GM12878 (cell line): ENCODE measurements at regions of chr15 and their contacts with region 1.

Region 1: GRCh38 chr15:40108855-40109735 is at the start of gene BMF:
- DNase-seq: peak; percentile 84
- ATAC-seq: peak; percentile 60
- H3K4me3 ChIP-seq: peak within 1 kb of the TSS; percentile 73
- H3K27ac ChIP-seq: peak within 1 kb of the TSS; percentile 96
- H3K4me1 ChIP-seq: peaks cover 54% of the 10 kb centered on the region
- H3K27me3 ChIP-seq: no peaks in the 10 kb centered on the region
- CTCF ChIP-seq: peak in 2 of 3 experiments; percentile 19 to 39; a peak in 3 of 6 replicates
- EP300 ChIP-seq: 0 out of 4 replicates have a peak, but pooled peaks of 1 of the 2 experiments have one; percentile 21
- POLR2A ChIP-seq: peak; percentile 49; the same call in 1 of the 2 replicates
- RAD21 ChIP-seq: peak; percentile 33
- polyA plus RNA-seq, gene BMF: 0.82 to 1.3 TPM

Region 2: GRCh38 chr15:39788108-39788507 is 321.0 kb before region 1 on chr15:
- CTCF ChIA-PET with region 1: interaction called, 17 read pairs
- POLR2A ChIA-PET with region 1: interaction called, 3 read pairs
- RAD21 ChIA-PET with region 1: interaction called, 8 read pairs
- SMC1A ChIA-PET with region 1: interaction called, 11 read pairs
- in situ Hi-C with region 1: loop called (anchors 10 kb)
- intact Hi-C with region 1: loop called (anchors 5 kb)
- DNase-seq: no peak
- ATAC-seq: peak; percentile 73
- H3K4me3 ChIP-seq: no peak overlapping the region
- H3K27ac ChIP-seq: no peak overlapping the region
- H3K4me1 ChIP-seq: peaks cover 17% of the 10 kb centered on the region
- H3K27me3 ChIP-seq: no peaks in the 10 kb centered on the region
- CTCF ChIP-seq: no peak
- EP300 ChIP-seq: no peak
- POLR2A ChIP-seq: no peak
- RAD21 ChIP-seq: no peak

Region 3: DNA sequence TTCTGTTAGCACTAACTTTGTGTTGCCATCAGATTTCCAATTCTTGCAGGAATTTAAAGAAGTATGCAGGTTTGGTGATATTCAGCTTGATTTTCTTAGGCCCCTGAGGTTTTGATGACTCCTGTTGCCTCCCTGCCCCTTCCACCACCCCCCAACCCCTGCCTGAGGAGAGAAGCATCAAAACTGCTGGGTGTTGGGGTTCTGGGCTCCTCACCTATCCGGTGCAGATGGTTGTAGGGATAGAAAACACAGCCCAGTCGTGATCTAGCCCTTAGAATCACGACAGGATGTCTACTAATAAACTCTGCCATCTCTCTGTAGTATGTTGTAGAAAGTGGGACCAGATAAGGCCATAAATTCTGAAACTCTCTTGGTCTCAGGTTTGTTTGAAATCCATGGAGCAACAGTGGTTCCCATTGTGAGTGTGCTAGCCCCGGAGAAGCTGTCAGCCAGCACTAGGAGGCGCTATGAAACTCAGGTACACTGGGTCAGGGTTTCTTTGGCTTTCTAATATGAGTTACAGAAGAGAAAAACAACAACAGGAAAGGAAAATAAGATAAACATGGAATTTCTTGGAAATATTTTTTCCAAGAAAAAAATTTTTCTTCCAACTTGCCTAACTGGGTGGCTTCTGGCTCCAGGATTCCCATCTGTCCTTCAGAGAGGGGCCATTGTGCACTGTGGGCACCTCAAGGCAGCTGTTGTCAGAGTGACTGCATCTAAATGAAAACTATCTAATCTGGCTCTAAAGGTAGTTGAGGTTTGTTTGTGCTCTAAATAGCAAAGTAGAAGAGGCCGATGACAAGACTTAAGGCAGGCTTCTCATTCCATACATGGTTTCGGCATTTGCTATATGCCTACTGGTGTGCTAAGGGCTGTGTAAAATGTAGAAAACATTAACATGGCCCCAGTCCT is 78.9 kb before region 1 on chr15:
- CTCF ChIA-PET with region 1: interaction called, 29 read pairs
- POLR2A ChIA-PET with region 1: no interaction called
- RAD21 ChIA-PET with region 1: interaction called, 12 read pairs
- SMC1A ChIA-PET with region 1: interaction called, 1,082 read pairs
- in situ Hi-C with region 1: no loop called
- intact Hi-C with region 1: no loop called
- DNase-seq: no peak
- ATAC-seq: peak; percentile 73
- H3K4me3 ChIP-seq: no peak overlapping the region
- H3K27ac ChIP-seq: no peak overlapping the region
- H3K4me1 ChIP-seq: no peaks in the 10 kb centered on the region
- H3K27me3 ChIP-seq: no peaks in the 10 kb centered on the region
- CTCF ChIP-seq: peak; percentile 48 to 72 (median 59); a peak in 5 of 6 replicates
- EP300 ChIP-seq: no peak
- POLR2A ChIP-seq: no peak
- RAD21 ChIP-seq: peak; percentile 52

Region 4: GRCh38 chr15:40054605-40055545 is 54.2 kb before region 1 on chr15:
- CTCF ChIA-PET with region 1: interaction called, 776 read pairs
- POLR2A ChIA-PET with region 1: interaction called, 307 read pairs
- RAD21 ChIA-PET with region 1: interaction called, 903 read pairs
- SMC1A ChIA-PET with region 1: interaction called, 1,082 read pairs
- in situ Hi-C with region 1: loop called (anchors 10 kb)
- intact Hi-C with region 1: no loop called
- DNase-seq: no peak
- ATAC-seq: peak; percentile 86
- H3K4me3 ChIP-seq: no peak overlapping the region
- H3K27ac ChIP-seq: peak overlapping the region; percentile 89
- H3K4me1 ChIP-seq: peaks cover 58% of the 10 kb centered on the region
- H3K27me3 ChIP-seq: no peaks in the 10 kb centered on the region
- CTCF ChIP-seq: no peak
- EP300 ChIP-seq: peak; percentile 72 to 83; a peak in 3 of 4 replicates
- POLR2A ChIP-seq: peak; percentile 60
- RAD21 ChIP-seq: 0 out of 2 replicates have a peak, but pooled peaks have one; percentile 18

Region 5: GRCh38 chr15:40081691-40082194 is 27.4 kb before region 1 on chr15:
- CTCF ChIA-PET with region 1: interaction called, 19 read pairs
- POLR2A ChIA-PET with region 1: interaction called, 5 read pairs
- RAD21 ChIA-PET with region 1: interaction called, 11 read pairs
- SMC1A ChIA-PET with region 1: interaction called, 981 read pairs
- in situ Hi-C with region 1: no loop called
- intact Hi-C with region 1: no loop called
- DNase-seq: no peak
- ATAC-seq: peak; percentile 72
- H3K4me3 ChIP-seq: peak overlapping the region; percentile 12; the same call in 1 of the 2 replicates
- H3K27ac ChIP-seq: no peak overlapping the region; the same call in 1 of the 2 replicates
- H3K4me1 ChIP-seq: peaks cover 37% of the 10 kb centered on the region
- H3K27me3 ChIP-seq: no peaks in the 10 kb centered on the region
- CTCF ChIP-seq: no peak
- EP300 ChIP-seq: peak in 1 of 2 experiments; percentile 25; a peak in 1 of 4 replicates
- POLR2A ChIP-seq: no peak
- RAD21 ChIP-seq: no peak

Region 6: GRCh38 chr15:40155270-40155910 is 46.3 kb after region 1 on chr15:
- CTCF ChIA-PET with region 1: interaction called, 94 read pairs
- POLR2A ChIA-PET with region 1: interaction called, 10 read pairs
- RAD21 ChIA-PET with region 1: interaction called, 88 read pairs
- SMC1A ChIA-PET with region 1: interaction called, 227 read pairs
- in situ Hi-C with region 1: no loop called
- intact Hi-C with region 1: loop called (anchors 2 kb)
- DNase-seq: no peak
- ATAC-seq: peak; percentile 59
- H3K4me3 ChIP-seq: no peak overlapping the region
- H3K27ac ChIP-seq: peak overlapping the region; percentile 10; the same call in 1 of the 2 replicates
- H3K4me1 ChIP-seq: peaks cover 11% of the 10 kb centered on the region
- H3K27me3 ChIP-seq: no peaks in the 10 kb centered on the region
- CTCF ChIP-seq: no peak
- EP300 ChIP-seq: no peak
- POLR2A ChIP-seq: no peak
- RAD21 ChIP-seq: no peak

Region 7: DNA sequence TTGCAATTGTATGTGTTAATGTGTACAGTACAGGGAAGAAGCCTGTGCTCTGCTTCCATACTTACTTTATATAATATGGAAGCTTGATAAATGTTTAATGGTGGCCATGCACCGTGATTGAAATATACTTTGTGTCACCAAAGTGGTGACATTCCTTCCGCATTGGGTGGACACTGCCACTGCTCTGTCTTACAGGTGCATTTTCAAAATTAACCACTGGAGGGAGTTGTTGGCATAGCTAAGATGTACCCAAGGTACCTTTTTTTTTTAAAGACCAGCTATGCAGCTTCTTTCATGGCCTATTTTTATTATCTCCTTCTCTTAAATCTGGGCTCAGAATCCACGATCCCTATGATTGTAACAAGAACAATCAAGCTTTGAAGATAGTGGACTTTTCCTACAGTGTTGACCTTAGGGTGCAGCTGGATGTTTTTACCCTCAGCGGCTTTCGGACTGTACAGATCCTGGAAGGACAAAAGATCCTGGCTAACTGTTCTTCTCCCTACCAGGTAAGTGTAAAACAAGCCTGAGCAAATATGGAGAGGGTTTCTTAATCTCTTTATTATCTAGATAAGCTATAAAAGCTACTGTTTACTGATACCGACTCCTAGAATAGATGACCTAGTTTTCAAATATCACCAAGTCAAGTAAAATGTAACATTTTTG is 108.2 kb after region 1 on chr15:
- CTCF ChIA-PET with region 1: interaction called, 30 read pairs
- POLR2A ChIA-PET with region 1: interaction called, 3 read pairs
- RAD21 ChIA-PET with region 1: interaction called, 13 read pairs
- SMC1A ChIA-PET with region 1: interaction called, 8 read pairs
- in situ Hi-C with region 1: no loop called
- intact Hi-C with region 1: no loop called
- DNase-seq: peak; percentile 26
- ATAC-seq: peak; percentile 95
- H3K4me3 ChIP-seq: no peak overlapping the region
- H3K27ac ChIP-seq: no peak overlapping the region
- H3K4me1 ChIP-seq: no peaks in the 10 kb centered on the region
- H3K27me3 ChIP-seq: no peaks in the 10 kb centered on the region
- CTCF ChIP-seq: peak; percentile 72 to 87 (median 82)
- EP300 ChIP-seq: no peak
- POLR2A ChIP-seq: no peak
- RAD21 ChIP-seq: peak; percentile 92